ENCODE measurements at regions of chr6 and their contacts with region 1.

Region 1: GRCh38 chr6:34490390-34491090 is 24.7 kb downstream of the PACSIN1 start:
- DNase-seq: no peak
- H3K4me3 ChIP-seq: no peak overlapping the region
- H3K27me3 ChIP-seq: peaks cover 5% of the 10 kb centered on the region; the same call in 1 of the 2 replicates
- CTCF ChIP-seq: no peak

Region 2: DNA sequence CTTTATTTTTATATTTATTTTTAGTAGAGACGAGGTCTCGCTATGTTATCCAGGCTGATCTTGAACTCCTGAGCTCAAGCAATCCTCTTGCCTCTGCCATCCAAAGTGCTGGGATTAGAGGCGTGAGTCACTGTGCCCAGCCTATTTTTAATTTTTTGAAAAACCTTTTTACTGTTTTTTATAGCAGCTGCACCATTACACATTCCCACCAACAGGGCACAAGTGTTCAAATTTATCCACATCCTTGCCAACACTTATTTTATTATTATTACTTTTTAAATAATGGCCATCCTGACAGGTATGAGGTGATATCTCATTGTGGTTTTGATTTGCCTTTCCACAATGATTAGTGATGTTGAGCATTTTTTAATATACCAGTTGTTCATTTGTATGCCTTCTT is 17.9 kb after region 1 on chr6:
- CTCF ChIA-PET with region 1: no interaction called
- POLR2A ChIA-PET with region 1: interaction called, 10 read pairs
- DNase-seq: no peak
- H3K4me3 ChIP-seq: no peak overlapping the region
- H3K27me3 ChIP-seq: peaks cover 4% of the 10 kb centered on the region; the same call in 1 of the 2 replicates
- CTCF ChIP-seq: no peak

Region 3: DNA sequence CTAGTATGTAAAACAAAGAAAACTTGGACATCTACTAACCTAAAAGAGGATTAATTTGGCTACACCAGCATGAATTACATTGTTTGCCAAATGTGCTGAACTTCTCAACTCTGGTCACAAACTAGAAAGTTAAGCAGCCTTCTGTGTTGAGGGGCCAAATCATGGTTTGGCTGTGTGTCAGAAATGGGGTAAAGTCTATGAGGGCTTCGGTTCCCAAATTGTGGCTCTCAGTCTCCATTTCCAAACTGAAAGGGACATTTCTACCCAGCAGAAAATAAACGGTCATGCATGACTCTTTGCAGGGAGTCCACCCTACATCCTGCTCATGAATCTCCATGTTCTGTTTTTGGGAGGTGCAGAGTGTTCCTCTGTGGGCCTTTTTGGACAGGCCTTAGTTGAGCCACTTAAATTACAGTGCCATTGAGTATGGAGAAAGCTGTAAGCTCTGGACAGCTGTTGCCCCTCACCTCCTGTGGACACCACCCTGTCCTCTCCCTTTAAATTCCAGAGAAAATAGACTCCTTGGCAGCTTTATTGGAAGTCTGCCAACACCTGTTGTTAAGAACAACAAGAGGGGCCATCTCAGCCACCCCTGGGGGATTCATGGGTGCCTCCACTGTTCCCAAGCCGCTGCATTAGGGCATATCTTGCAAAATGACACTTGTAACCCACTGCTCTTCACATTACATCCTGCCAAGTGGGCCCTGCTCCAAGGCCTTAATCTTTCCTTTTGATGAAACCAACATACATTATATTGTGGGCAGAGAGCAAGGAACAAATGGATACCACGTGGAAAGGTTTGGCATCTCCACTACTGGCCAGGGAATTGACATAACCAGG is 239.3 kb after region 1 on chr6:
- CTCF ChIA-PET with region 1: no interaction called
- POLR2A ChIA-PET with region 1: no interaction called
- DNase-seq: no peak
- H3K4me3 ChIP-seq: no peak overlapping the region
- H3K27me3 ChIP-seq: no peaks in the 10 kb centered on the region
- CTCF ChIP-seq: no peak

Region 4: GRCh38 chr6:35275744-35276260 is 785.3 kb after region 1 on chr6:
- CTCF ChIA-PET with region 1: no interaction called
- POLR2A ChIA-PET with region 1: no interaction called
- DNase-seq: no peak
- H3K4me3 ChIP-seq: no peak overlapping the region
- H3K27me3 ChIP-seq: no peaks in the 10 kb centered on the region
- CTCF ChIP-seq: no peak

Measured in BJ (cell line).